ENCODE measurements at regions of chr19 and their contacts with region 1.

Region 1: DNA sequence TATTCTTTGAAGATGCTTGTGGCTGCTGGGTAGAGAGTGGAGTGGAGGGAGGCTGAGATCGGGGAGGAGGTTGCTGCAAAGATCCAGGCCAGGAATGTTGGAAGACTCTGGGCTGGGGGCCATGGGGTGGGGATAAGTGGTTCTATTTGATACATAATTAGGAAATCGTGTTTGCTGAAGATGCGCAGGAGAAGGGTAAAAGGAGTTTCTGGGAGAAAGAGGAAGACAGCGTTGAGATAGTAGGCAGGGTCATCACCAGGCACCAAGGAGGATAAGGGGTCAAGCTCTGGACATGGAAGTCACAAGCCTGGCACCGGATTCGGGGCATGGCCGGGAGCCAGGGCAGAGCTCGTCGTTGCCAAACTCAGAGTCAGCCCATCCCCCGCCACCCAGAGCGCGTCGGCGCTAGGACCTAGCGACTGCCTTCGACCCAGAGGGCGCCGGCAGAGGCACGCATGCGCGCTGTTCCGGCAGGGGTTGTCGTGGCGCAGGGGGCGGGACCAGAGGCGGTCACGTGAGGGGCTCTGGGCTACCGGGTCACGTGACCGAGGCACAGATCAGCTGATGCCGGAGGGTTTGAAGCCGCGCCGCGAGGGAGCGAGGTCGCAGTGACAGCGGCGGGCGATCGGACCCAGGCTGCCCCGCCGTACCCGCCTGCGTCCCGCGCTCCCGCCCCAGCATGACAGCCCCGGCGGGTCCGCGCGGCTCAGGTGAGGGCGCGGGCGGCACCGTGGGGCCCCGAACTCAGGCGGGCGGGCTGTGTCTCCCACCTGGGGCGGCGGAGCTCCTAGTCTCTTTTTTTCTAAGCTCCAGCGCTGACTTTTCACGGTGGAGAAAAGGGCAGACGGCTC is at the start of gene MCOLN1:
- DNase-seq: peak; percentile 99 to 100 (median 100)
- ATAC-seq: peak; percentile 92 to 98 (median 92)
- H3K4me3 ChIP-seq: peak within 1 kb of the TSS; percentile 67 to 97 (median 86)
- H3K27ac ChIP-seq: peak within 1 kb of the TSS in 11 of 12 donors; percentile 28 to 84 (median 66)
- H3K4me1 ChIP-seq: peaks cover 0 to 41% (median 18%) of the 10 kb centered on the region in 12 donors
- H3K27me3 ChIP-seq: no peaks in the 10 kb centered on the region
- CTCF ChIP-seq: no peak
- POLR2A ChIP-seq: peak in 1 of 2 donors; percentile 83
- total RNA-seq, gene MCOLN1: 12.1 to 49.7 (median 14.9) TPM

Region 2: GRCh38 chr19:7394731-7395359 is 127.5 kb before region 1 on chr19:
- intact Hi-C with region 1: loop called in 1 of 10 experiments (anchors 10 kb)
- DNase-seq: peak; percentile 89 to 96 (median 89)
- ATAC-seq: peak; percentile 96 to 100 (median 99)
- H3K4me3 ChIP-seq: peak overlapping the region; percentile 68 to 100 (median 97)
- H3K27ac ChIP-seq: peak overlapping the region in 11 of 12 donors; percentile 24 to 87 (median 81)
- H3K4me1 ChIP-seq: peaks cover 0 to 34% (median 15%) of the 10 kb centered on the region in 12 donors
- H3K27me3 ChIP-seq: no peaks in the 10 kb centered on the region
- CTCF ChIP-seq: peak in 2 of 12 donors; percentile 13 to 17
- POLR2A ChIP-seq: peak in 1 of 2 donors; percentile 77

Region 3: GRCh38 chr19:7535035-7535992 is 13.0 kb after region 1 on chr19 and contains the start of gene PNPLA6:
- intact Hi-C with region 1: loop called in 1 of 10 experiments (anchors 1 kb)
- DNase-seq: peak; percentile 96 to 98 (median 97)
- ATAC-seq: peak; percentile 78 to 90 (median 86)
- H3K4me3 ChIP-seq: peak within 1 kb of the TSS; percentile 62 to 98 (median 86)
- H3K27ac ChIP-seq: peak within 1 kb of the TSS; percentile 57 to 96 (median 93)
- H3K4me1 ChIP-seq: peaks cover 0 to 25% (median 10%) of the 10 kb centered on the region in 12 donors
- H3K27me3 ChIP-seq: no peaks in the 10 kb centered on the region
- CTCF ChIP-seq: no peak
- POLR2A ChIP-seq: peak in 1 of 2 donors; percentile 68
- total RNA-seq, gene PNPLA6: 41.4 to 105 (median 49.9) TPM

Measured in heart left ventricle (tissue), 16 donors.